Activated CD4-positive, alpha-beta memory T cell treated with anti-CD3 and anti-CD28 coated beads, Interleukin-2, amount 10 ng/mL, durations not matched to agents 7 days and 5 days (primary cell): ENCODE measurements at regions of chr20 and their contacts with region 1.

Region 1: DNA sequence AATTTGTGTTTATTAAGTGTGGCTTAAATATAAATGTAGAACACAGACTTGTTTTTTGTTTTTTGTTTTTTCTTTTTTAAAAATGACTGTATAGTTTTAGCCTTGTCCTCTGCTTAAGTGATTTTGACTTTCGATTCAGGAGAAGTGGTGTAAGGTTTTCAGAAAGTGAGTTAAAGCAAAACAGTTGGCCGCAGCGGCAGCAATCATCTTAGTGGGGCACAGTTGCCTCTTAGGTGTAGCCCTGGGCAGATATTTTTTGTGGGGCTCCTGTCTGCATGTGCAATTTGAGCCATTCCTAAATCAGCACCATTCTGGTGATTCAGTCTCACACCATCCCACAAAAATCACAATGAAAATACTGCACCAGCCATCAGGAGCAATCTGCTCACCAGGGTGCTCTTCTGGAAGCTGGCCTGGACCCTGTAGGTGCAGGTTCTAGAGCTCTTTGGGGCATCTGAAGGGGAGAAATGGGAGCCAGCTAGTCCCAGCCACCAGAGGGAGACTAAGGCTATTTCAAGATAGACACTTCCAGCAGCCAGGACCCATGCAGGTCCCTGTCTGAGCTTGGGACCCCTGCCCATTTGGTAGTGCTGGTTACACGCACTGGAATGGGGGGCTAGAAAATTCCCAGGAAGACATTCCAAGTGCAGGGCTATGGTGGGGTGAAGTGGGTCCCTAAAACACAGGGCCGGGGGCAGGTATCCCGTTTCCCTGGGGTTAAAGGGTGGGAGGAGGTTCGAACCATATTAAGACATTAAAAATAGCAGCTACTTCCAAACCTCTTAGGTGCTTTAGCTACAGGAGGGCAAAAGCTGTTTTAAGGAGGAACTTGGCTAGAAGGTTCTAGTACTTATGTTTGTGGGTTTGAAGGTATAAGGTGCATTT is 156.6 kb downstream of the NFATC2 start:
- DNase-seq: peak; percentile 49
- H3K4me3 Mint-ChIP-seq: no peak overlapping the region
- H3K27ac Mint-ChIP-seq: peak overlapping the region; percentile 61
- H3K4me1 Mint-ChIP-seq: peaks cover 73% of the 10 kb centered on the region
- H3K27me3 Mint-ChIP-seq: no peaks in the 10 kb centered on the region

Region 2: DNA sequence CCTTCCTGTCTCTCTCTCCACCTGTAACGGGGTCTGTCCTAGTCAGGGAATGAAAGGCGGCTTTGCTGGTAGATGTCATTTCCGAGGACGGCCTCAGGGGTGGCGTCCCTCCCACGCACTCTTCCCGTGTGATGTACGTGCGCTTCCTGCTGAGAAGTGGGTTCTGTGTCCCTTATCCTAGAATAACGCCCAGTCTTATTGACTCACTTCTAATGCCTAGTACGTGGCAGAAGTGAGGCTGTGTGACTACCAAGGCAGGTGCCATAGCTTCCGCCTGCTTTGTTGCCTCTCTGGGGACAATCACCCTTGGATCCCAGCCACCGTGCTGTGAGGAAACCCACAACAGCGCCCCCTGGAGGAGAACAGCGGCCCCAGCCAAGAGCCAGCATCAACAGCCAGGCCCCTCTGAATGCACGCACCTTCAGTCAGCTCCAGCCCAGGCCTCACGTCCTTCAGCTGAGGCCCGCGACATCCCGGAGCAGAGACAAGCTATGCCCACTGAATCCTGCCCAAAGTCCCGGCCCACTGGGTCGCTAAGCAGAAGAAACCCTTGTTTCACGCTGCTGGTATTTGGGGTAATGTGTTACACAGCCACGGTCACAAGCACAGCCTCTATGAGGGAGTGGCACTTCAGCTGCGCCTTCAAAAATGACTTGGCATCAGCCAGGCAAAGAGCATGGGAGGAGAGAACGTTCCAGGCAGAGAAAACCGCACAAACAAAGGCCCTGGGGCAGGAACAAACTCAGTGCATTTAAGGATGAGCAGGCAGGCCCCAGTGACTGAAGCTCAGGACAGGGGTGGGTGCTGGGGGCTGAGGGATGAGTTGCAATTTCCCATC is 67.6 kb before region 1 on chr20:
- CTCF ChIA-PET with region 1: no interaction called
- POLR2A ChIA-PET with region 1: no interaction called
- DNase-seq: peak; percentile 42
- H3K4me3 Mint-ChIP-seq: no peak overlapping the region
- H3K27ac Mint-ChIP-seq: no peak overlapping the region
- H3K4me1 Mint-ChIP-seq: no peaks in the 10 kb centered on the region
- H3K27me3 Mint-ChIP-seq: peaks cover 2% of the 10 kb centered on the region

Region 3: DNA sequence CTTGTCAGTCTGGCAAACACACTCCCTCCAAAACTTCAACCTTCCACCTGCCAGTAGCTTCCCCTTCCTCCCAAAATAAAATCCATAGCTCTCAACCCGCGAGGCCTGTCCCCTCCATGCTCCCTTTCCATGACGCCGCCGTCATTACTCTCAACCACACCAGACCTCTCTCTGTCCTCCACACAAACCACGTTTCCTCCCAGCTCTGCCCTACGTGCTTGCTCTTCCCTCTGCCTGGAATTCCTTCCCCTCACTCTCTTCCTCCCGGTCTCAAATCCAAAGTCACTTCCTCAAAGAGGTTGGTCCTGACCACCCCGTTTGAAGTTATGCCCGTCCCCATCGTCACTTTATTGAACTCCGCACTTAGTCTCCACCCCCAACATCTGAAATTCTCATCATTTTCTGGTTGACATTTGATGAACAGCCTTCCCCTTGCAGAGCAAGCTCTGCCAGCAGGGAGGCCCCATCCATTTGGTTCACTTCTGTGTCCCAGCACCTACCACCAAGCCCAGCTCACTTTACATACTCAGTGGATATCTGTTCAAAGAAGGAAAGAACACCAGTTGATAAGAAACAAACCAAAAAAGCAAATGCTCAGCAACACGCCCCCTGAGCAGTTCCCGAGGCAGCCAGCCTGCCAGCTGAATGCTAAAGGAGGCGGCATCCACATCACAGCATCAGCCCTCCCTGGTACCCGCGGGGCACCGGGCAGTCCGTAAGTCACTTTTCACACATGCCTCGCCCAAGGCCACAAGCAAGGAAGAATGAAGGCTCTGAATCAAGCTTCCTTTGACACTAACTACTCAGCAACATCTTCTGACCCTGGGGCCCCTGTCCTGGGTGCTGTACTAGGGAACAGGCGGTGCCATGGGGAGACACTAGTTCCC is 31.6 kb after region 1 on chr20:
- CTCF ChIA-PET with region 1: interaction called, 23 read pairs
- POLR2A ChIA-PET with region 1: interaction called, 12 read pairs
- DNase-seq: peak; percentile 55
- H3K4me3 Mint-ChIP-seq: peak overlapping the region; percentile 1
- H3K27ac Mint-ChIP-seq: peak overlapping the region; percentile 85
- H3K4me1 Mint-ChIP-seq: peaks cover 97% of the 10 kb centered on the region
- H3K27me3 Mint-ChIP-seq: no peaks in the 10 kb centered on the region

Region 4: DNA sequence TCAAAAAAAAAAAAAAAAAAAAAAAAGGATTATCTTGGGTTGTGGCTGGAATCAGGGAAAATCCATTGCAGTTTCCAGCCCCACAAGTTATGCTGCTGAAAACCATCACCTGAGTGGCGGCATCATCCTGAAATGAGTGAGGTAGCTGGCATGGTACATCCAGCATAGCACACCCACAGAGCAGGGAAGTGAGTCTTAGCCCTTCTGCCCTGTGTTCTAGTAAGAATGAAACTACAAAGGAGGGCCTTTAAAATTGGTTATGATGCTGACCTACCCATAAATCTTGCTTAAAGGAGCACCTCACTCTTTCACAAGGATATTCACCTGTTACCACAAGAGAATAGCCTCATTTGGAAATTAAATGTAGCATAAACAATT is 37.4 kb after region 1 on chr20:
- CTCF ChIA-PET with region 1: interaction called, 23 read pairs
- POLR2A ChIA-PET with region 1: interaction called, 12 read pairs
- DNase-seq: peak; percentile 56
- H3K4me3 Mint-ChIP-seq: peak overlapping the region; percentile 53
- H3K27ac Mint-ChIP-seq: peak overlapping the region; percentile 90
- H3K4me1 Mint-ChIP-seq: peaks cover 95% of the 10 kb centered on the region
- H3K27me3 Mint-ChIP-seq: no peaks in the 10 kb centered on the region